Activated CD4-positive, alpha-beta memory T cell treated with anti-CD3 and anti-CD28 coated beads, Interleukin-2, amount 10 ng/mL, durations not matched to agents 7 days and 5 days (primary cell): ENCODE measurements at regions of chr20 and their contacts with region 1.

Region 1: DNA sequence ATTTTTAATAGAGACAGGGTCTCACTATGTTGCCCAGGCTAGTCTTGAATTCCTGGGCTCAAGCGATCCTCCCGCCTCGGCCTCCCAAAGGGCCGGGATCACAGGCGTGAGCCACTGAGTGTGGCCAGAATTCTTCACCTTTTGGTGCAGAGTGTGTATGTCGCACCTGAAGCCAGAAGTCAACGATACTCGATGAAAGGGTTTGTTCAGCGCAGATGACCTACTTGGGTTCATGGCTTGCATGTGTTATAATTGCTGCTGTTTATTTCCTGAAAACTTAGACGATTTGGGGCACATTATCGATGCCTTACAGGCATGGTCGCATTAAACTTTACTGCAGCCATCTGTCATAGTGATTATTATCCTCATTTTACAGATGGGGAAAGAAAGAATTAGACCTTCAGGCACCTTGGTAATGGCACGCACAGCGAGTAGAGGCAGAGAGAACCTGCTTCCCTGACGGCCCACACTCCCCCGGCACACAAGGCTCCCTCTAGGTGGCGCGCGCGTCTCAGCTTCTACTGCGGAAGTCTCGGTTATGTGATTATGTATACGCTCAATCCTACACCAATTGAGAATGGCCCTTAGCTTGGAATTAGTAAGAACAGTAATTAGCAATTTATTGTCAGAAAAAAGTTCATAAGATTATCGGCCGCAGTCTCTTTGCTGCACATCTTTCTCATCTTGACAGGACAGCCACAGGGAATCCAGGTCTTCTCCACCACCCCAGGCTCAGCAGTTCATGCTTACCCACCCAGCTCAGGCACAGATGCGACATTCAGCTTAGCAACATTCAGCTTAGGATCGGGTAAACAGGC is 212.8 kb upstream of the PROKR2 start:
- DNase-seq: peak; percentile 89
- H3K4me3 Mint-ChIP-seq: peak overlapping the region; percentile 23
- H3K27ac Mint-ChIP-seq: peak overlapping the region; percentile 45
- H3K4me1 Mint-ChIP-seq: peaks cover 22% of the 10 kb centered on the region
- H3K27me3 Mint-ChIP-seq: peaks cover 2% of the 10 kb centered on the region

Region 2: DNA sequence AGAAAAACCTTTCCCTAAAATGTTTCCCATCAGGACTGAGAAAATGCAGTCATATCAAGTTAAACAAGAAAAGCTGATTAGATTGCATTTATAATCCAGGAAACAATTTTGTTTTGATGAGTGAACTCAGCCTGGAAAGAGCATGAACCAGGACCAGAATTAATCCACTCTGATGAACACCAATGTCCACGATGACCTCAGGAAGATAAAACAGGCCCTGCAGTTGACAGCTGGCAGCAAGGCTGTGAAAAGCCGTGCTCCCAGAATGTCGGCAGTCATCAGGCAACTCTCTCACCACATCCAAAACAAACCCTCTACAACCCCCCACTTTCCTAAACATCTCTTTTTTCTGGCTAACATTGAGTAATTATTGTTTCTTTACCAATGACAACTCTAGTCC is 138.8 kb before region 1 on chr20:
- CTCF ChIA-PET with region 1: no interaction called
- POLR2A ChIA-PET with region 1: no interaction called
- DNase-seq: no peak
- H3K4me3 Mint-ChIP-seq: no peak overlapping the region
- H3K27ac Mint-ChIP-seq: no peak overlapping the region
- H3K4me1 Mint-ChIP-seq: no peaks in the 10 kb centered on the region
- H3K27me3 Mint-ChIP-seq: peaks cover 15% of the 10 kb centered on the region

Region 3: DNA sequence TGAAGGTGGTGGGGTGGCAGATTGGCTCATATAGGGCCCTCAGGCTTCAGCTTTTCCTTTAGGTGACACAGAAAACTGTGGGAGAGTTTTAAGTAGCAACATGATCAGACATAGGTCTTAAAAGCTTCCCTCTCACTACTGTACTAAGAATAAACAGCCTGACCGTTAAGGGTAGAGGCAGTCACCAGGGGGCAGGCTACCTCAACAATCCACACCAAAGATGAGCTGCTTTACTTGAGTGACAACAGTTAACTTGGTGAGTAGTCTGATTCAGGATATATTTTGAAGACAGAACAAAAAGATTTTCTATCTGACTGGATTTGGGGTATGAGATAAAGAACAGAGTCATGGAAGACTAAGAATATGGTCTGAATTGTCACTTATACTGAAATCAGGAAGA is 27.6 kb after region 1 on chr20:
- CTCF ChIA-PET with region 1: interaction called, 15 read pairs
- POLR2A ChIA-PET with region 1: no interaction called
- DNase-seq: peak; percentile 68
- H3K4me3 Mint-ChIP-seq: no peak overlapping the region
- H3K27ac Mint-ChIP-seq: no peak overlapping the region
- H3K4me1 Mint-ChIP-seq: peaks cover 3% of the 10 kb centered on the region
- H3K27me3 Mint-ChIP-seq: no peaks in the 10 kb centered on the region

Region 4: GRCh38 chr20:5781798-5782750 is 252.5 kb after region 1 on chr20:
- CTCF ChIA-PET with region 1: interaction called, 79 read pairs
- POLR2A ChIA-PET with region 1: no interaction called
- DNase-seq: no peak
- H3K4me3 Mint-ChIP-seq: no peak overlapping the region
- H3K27ac Mint-ChIP-seq: no peak overlapping the region
- H3K4me1 Mint-ChIP-seq: peaks cover 13% of the 10 kb centered on the region
- H3K27me3 Mint-ChIP-seq: no peaks in the 10 kb centered on the region

Region 5: DNA sequence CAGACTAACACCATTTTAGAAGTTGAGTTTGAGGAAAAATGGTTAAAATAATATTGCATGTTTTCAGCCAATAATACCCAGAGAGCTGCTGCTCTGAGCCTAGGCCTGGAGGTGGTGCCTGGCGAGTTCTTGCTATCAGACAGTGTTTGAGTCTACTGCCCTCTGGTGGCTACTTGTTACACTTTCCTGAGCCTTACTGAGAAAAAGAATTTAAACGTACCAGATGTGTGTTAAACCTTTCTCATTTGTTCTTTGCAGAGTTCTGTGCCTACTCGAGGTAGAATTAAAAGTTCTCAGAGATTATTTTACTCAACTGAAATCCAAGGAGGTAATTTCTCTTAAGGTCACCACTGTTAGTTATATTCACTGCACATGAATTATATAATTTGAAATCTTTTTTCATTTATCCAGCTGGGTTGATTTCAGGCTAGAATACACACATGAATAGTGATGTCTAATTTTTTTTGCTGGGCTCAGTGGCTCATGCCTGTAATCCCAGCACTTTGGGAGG is 258.9 kb after region 1 on chr20:
- CTCF ChIA-PET with region 1: interaction called, 79 read pairs
- POLR2A ChIA-PET with region 1: interaction called, 11 read pairs
- DNase-seq: peak; percentile 76
- H3K4me3 Mint-ChIP-seq: no peak overlapping the region
- H3K27ac Mint-ChIP-seq: no peak overlapping the region
- H3K4me1 Mint-ChIP-seq: peaks cover 2% of the 10 kb centered on the region
- H3K27me3 Mint-ChIP-seq: no peaks in the 10 kb centered on the region

Region 6: GRCh38 chr20:5793916-5794315 is 264.4 kb after region 1 on chr20:
- CTCF ChIA-PET with region 1: interaction called, 79 read pairs
- POLR2A ChIA-PET with region 1: interaction called, 3 read pairs
- DNase-seq: no peak
- H3K4me3 Mint-ChIP-seq: no peak overlapping the region
- H3K27ac Mint-ChIP-seq: no peak overlapping the region
- H3K4me1 Mint-ChIP-seq: no peaks in the 10 kb centered on the region
- H3K27me3 Mint-ChIP-seq: no peaks in the 10 kb centered on the region

Region 7: DNA sequence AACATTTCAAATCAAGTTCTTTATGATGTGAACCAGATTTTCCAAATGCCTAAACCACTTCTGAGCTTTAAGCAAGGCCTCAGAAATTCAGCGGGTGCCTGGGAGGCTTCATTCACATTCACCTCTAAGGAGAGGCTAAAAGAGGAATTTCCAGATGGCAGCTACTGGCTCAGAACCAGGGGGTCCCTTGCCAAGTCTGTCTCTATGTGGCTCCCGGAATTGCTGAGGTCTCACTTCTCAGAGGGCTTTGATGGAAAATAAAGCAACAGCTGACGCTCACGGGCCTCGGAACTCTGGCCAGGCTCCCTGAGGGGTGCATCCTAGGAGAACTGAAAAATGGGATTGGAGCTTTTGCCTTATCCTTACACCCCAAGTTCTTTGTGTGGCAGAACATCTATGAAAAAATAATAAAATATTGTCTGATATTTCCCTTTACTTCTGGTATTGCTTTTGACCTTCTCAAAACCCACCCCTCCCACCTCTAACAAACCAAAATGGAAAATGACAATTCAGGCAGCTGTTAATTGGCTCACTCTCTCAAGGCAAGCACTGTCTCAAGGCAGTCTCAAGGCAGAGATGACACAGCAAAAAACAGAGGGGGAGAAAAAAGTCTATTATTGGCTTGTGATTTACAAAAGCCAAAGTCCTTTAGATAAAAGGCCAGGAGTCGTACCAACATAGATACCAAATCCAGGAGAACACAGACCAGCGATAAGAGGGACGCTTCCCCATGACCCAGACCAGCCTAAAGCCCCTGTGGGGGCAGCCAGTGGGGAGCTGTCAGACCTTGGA is 546.1 kb after region 1 on chr20:
- CTCF ChIA-PET with region 1: interaction called, 31 read pairs
- POLR2A ChIA-PET with region 1: no interaction called
- DNase-seq: no peak
- H3K4me3 Mint-ChIP-seq: no peak overlapping the region
- H3K27ac Mint-ChIP-seq: no peak overlapping the region
- H3K4me1 Mint-ChIP-seq: peaks cover 3% of the 10 kb centered on the region
- H3K27me3 Mint-ChIP-seq: peaks cover 11% of the 10 kb centered on the region